Heart right ventricle (tissue), 16 donors: ENCODE measurements at regions of chr3 and their contacts with region 1.

Region 1: GRCh38 chr3:167929968-167930367 is 165.8 kb downstream of the GOLIM4 start:
- DNase-seq: peak in 1 of 2 donors; percentile 6
- ATAC-seq: peak in 6 of 8 donors; percentile 60 to 80 (median 67)
- H3K4me3 ChIP-seq: no peak overlapping the region
- H3K27ac ChIP-seq: no peak overlapping the region
- H3K4me1 ChIP-seq: peaks cover 0 to 8% (median 0%) of the 10 kb centered on the region in 9 donors
- H3K27me3 ChIP-seq: no peaks in the 10 kb centered on the region
- CTCF ChIP-seq: no peak

Region 2: DNA sequence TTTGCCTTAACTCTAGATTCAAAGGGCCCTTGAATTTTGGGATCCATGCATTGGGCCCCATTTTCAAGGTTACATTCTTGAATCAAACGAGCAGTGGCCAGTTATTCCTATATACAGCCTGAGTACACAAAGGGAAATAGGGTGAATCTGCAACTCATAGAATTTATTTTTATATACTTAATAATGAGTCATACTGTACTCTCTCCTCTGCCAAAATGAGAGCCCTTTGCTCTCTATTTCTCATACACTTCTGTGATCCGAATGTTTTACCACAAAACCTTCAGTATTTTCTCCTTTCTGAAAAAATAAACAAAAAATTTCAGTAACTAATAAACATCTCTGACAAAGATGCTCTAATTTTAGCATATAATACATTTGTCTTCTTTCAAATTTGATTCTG is 77.8 kb before region 1 on chr3:
- intact Hi-C with region 1: no loop called
- DNase-seq: no peak
- ATAC-seq: no peak
- H3K4me3 ChIP-seq: no peak overlapping the region
- H3K27ac ChIP-seq: peak overlapping the region in 4 of 10 donors; percentile 7 to 61 (median 20)
- H3K4me1 ChIP-seq: peaks cover 0 to 20% (median 0%) of the 10 kb centered on the region in 9 donors
- H3K27me3 ChIP-seq: no peaks in the 10 kb centered on the region
- CTCF ChIP-seq: no peak

Region 3: GRCh38 chr3:167882067-167882667 is 47.8 kb before region 1 on chr3:
- intact Hi-C with region 1: no loop called
- DNase-seq: no peak
- ATAC-seq: peak in 4 of 8 donors; percentile 19 to 69 (median 48)
- H3K4me3 ChIP-seq: peak overlapping the region in 2 of 10 donors; percentile 20 to 30
- H3K27ac ChIP-seq: peak overlapping the region in 3 of 10 donors; percentile 12 to 46 (median 38)
- H3K4me1 ChIP-seq: peaks cover 0 to 23% (median 10%) of the 10 kb centered on the region in 9 donors
- H3K27me3 ChIP-seq: no peaks in the 10 kb centered on the region
- CTCF ChIP-seq: peak; percentile 49 to 84 (median 73)

Region 4: GRCh38 chr3:168024537-168024941 is 94.6 kb after region 1 on chr3:
- intact Hi-C with region 1: loop called in 1 of 10 experiments (anchors 10 kb)
- DNase-seq: peak in 1 of 2 donors; percentile 27
- ATAC-seq: peak in 7 of 8 donors; percentile 44 to 97 (median 88)
- H3K4me3 ChIP-seq: no peak overlapping the region
- H3K27ac ChIP-seq: peak overlapping the region; percentile 7 to 86 (median 73)
- H3K4me1 ChIP-seq: peaks cover 0 to 51% (median 25%) of the 10 kb centered on the region in 9 donors
- H3K27me3 ChIP-seq: no peaks in the 10 kb centered on the region
- CTCF ChIP-seq: no peak

Region 5: GRCh38 chr3:168040607-168041208 is 110.7 kb after region 1 on chr3:
- intact Hi-C with region 1: loop called in 9 of 10 experiments (anchors 1 to 10 kb)
- DNase-seq: no peak
- ATAC-seq: peak; percentile 42 to 79 (median 70)
- H3K4me3 ChIP-seq: no peak overlapping the region
- H3K27ac ChIP-seq: no peak overlapping the region
- H3K4me1 ChIP-seq: peaks cover 0 to 37% (median 17%) of the 10 kb centered on the region in 9 donors
- H3K27me3 ChIP-seq: no peaks in the 10 kb centered on the region
- CTCF ChIP-seq: peak; percentile 22 to 75 (median 70)

Region 6: GRCh38 chr3:168047190-168047795 is 117.3 kb after region 1 on chr3:
- intact Hi-C with region 1: loop called in 4 of 10 experiments (anchors 5 to 10 kb)
- DNase-seq: no peak
- ATAC-seq: peak; percentile 52 to 67 (median 63)
- H3K4me3 ChIP-seq: no peak overlapping the region
- H3K27ac ChIP-seq: no peak overlapping the region
- H3K4me1 ChIP-seq: peaks cover 0 to 71% (median 47%) of the 10 kb centered on the region in 9 donors
- H3K27me3 ChIP-seq: no peaks in the 10 kb centered on the region
- CTCF ChIP-seq: peak; percentile 72 to 97 (median 83)